Thyroid gland (tissue), 4 donors: ENCODE measurements at regions of chr11 and their contacts with region 1.

Region 1: GRCh38 chr11:44538375-44539054 is 26.9 kb upstream of the CD82 start:
- DNase-seq: peak; percentile 65 to 78
- H3K4me3 ChIP-seq: no peak overlapping the region
- H3K27ac ChIP-seq: no peak overlapping the region
- H3K4me1 ChIP-seq: peaks cover 0 to 4% of the 10 kb centered on the region in 2 donors
- H3K27me3 ChIP-seq: no peaks in the 10 kb centered on the region
- CTCF ChIP-seq: peak; percentile 75 to 97 (median 96)
- POLR2A ChIP-seq: no peak

Region 2: GRCh38 chr11:44104481-44105294 is 433.8 kb before region 1 on chr11:
- intact Hi-C with region 1: loop called (anchors 10 kb)
- DNase-seq: no peak
- H3K4me3 ChIP-seq: no peak overlapping the region
- H3K27ac ChIP-seq: no peak overlapping the region
- H3K4me1 ChIP-seq: peaks cover 0 to 5% of the 10 kb centered on the region in 2 donors
- H3K27me3 ChIP-seq: no peaks in the 10 kb centered on the region
- CTCF ChIP-seq: no peak
- POLR2A ChIP-seq: no peak

Region 3: GRCh38 chr11:44286268-44286880 is 252.1 kb before region 1 on chr11:
- intact Hi-C with region 1: loop called (anchors 2 kb)
- DNase-seq: peak; percentile 37 to 55
- H3K4me3 ChIP-seq: no peak overlapping the region
- H3K27ac ChIP-seq: no peak overlapping the region
- H3K4me1 ChIP-seq: no peaks in the 10 kb centered on the region
- H3K27me3 ChIP-seq: no peaks in the 10 kb centered on the region
- CTCF ChIP-seq: peak; percentile 85 to 95 (median 93)
- POLR2A ChIP-seq: no peak